WTC11 (cell line): ENCODE measurements at regions of chr19 and their contacts with region 1.

Region 1: GRCh38 chr19:11435058-11435832 is at the starts of genes ODAD3 and PRKCSH:
- DNase-seq: peak; percentile 99
- ATAC-seq: peak; percentile 91
- H3K4me3 Mint-ChIP-seq: peak within 1 kb of the TSS; percentile 96
- H3K27ac Mint-ChIP-seq: peak within 1 kb of the TSS; percentile 97
- H3K4me1 Mint-ChIP-seq: peaks cover 11% of the 10 kb centered on the region
- H3K27me3 Mint-ChIP-seq: no peaks in the 10 kb centered on the region
- CTCF ChIP-seq: peak; percentile 95
- total RNA-seq, gene ODAD3: 4.1 to 5.8 TPM (median 4.8 TPM) in 3 replicates
- total RNA-seq, gene PRKCSH: 396 to 405 TPM (median 402 TPM) in 3 replicates

Region 2: GRCh38 chr19:11405846-11406643 is 29.2 kb before region 1 on chr19:
- CTCF ChIA-PET with region 1: interaction called, 16 read pairs
- POLR2A ChIA-PET with region 1: no interaction called
- DNase-seq: peak; percentile 75
- ATAC-seq: peak; percentile 96
- H3K4me3 Mint-ChIP-seq: no peak overlapping the region
- H3K27ac Mint-ChIP-seq: no peak overlapping the region
- H3K4me1 Mint-ChIP-seq: no peaks in the 10 kb centered on the region
- H3K27me3 Mint-ChIP-seq: no peaks in the 10 kb centered on the region
- CTCF ChIP-seq: no peak

Region 3: DNA sequence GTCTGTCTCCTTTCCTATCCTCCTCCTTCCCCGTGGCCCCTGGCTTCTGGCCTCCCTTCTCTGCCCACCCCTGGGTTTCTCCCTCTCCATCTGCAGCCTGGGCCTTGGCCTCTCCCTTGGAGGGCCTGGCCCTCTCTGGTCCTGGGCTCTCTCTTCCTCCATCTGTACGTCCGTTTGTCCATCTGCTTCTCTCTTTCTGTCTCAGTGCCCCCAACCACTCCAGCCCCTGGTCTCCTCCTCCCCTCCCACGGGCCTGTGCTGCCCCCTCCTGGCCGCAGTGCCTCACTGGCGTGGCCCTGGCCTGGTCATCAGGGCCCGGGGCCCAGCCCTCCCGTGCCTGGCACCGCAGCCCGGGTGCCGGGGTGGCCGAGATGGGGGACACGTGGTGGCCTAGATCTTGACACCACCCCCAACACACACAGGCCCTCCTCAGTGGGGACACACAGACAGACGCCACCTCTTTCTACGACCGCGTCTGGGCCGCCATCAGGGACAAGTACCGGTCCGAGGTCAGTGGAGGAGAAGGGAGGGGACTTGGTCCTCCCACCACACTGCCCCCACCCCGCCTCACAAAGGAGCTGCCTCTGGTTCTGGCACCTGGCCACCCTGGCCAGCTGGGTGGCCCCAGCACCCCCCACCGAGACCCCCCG is 11.5 kb after region 1 on chr19:
- CTCF ChIA-PET with region 1: interaction called, 18 read pairs
- POLR2A ChIA-PET with region 1: no interaction called
- DNase-seq: peak; percentile 88
- ATAC-seq: peak; percentile 83
- H3K4me3 Mint-ChIP-seq: no peak overlapping the region
- H3K27ac Mint-ChIP-seq: no peak overlapping the region
- H3K4me1 Mint-ChIP-seq: peaks cover 7% of the 10 kb centered on the region
- H3K27me3 Mint-ChIP-seq: no peaks in the 10 kb centered on the region; the same call in 1 of the 2 replicates
- CTCF ChIP-seq: peak; percentile 77

Region 4: GRCh38 chr19:11496391-11497163 is 61.3 kb after region 1 on chr19:
- CTCF ChIA-PET with region 1: no interaction called
- POLR2A ChIA-PET with region 1: no interaction called
- DNase-seq: peak; percentile 91
- ATAC-seq: peak; percentile 97
- H3K4me3 Mint-ChIP-seq: no peak overlapping the region
- H3K27ac Mint-ChIP-seq: no peak overlapping the region
- H3K4me1 Mint-ChIP-seq: no peaks in the 10 kb centered on the region
- H3K27me3 Mint-ChIP-seq: no peaks in the 10 kb centered on the region
- CTCF ChIP-seq: peak; percentile 84

Region 5: DNA sequence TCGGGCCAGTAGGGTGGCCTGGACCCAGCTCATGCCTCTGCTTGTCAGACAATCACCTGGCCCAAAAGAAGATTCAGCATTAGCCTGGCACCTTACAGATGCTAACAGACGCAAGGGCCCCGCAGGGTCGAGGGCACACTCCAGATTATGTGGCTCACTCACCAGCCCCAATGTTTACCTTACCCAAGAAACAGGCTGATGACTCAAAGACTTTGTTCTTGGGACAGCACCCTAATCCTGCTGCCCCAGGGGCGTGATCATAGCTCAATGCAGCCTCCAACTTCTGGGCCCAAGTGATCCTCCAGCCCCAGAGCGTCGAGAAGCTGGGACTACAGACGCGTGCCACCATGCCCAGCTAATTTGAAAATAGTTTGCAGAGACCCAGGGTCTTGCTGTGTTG is 83.9 kb after region 1 on chr19:
- CTCF ChIA-PET with region 1: no interaction called
- POLR2A ChIA-PET with region 1: no interaction called
- DNase-seq: no peak
- ATAC-seq: no peak
- H3K4me3 Mint-ChIP-seq: no peak overlapping the region
- H3K27ac Mint-ChIP-seq: no peak overlapping the region
- H3K4me1 Mint-ChIP-seq: no peaks in the 10 kb centered on the region
- H3K27me3 Mint-ChIP-seq: no peaks in the 10 kb centered on the region
- CTCF ChIP-seq: no peak